Tibial artery (tissue), 4 donors: ENCODE measurements at regions of chr7 and their contacts with region 1.

Region 1: DNA sequence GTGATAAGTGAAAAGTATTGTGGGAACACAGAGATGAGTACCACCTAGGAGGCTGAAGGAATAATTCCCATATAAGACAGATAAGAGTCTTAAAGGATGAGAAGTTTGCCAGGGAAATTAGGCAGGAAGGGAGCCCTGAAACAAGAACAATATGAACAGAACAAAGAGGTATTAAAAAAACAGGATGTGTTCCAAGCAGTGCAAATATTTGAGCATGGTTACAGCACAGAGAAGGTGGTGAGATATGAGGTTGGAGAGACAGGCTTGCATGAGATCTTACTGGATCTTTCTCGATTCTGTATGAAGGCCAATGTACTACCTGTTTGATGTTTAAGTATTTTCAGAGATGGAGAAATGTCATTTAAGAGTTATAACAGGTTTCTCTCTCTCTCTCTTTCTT is 20.3 kb downstream of the TAC1 start:
- DNase-seq: no peak
- H3K4me3 ChIP-seq: no peak overlapping the region
- H3K27ac ChIP-seq: no peak overlapping the region
- H3K4me1 ChIP-seq: no peaks in the 10 kb centered on the region
- H3K27me3 ChIP-seq: no peaks in the 10 kb centered on the region
- CTCF ChIP-seq: no peak

Region 2: GRCh38 chr7:95804052-95804451 is 1948.2 kb before region 1 on chr7:
- intact Hi-C with region 1: loop called (anchors 5 kb)
- DNase-seq: no peak
- H3K4me3 ChIP-seq: no peak overlapping the region
- H3K27ac ChIP-seq: no peak overlapping the region
- H3K4me1 ChIP-seq: peaks cover 0 to 7% (median 0%) of the 10 kb centered on the region in 4 donors
- H3K27me3 ChIP-seq: no peaks in the 10 kb centered on the region
- CTCF ChIP-seq: no peak

Region 3: DNA sequence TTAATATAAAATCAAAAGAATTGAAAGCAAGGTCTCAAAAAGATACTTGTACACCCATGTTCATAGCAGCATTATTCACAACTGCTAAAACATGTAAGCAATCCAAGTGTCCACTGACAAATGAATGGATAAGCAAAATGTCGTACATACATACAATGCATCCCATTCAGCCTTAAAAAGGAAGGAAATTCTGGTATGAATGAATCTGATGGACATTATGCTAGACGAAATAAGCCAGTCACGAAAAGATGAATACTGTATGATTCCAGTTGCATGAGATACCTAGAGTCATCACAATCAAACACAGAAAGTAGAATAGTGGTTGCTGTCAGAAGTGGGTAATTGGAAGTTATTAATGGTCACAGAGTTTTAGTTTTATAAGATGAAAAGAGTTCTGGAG is 29.8 kb before region 1 on chr7:
- intact Hi-C with region 1: no loop called
- DNase-seq: no peak
- H3K4me3 ChIP-seq: no peak overlapping the region
- H3K27ac ChIP-seq: no peak overlapping the region
- H3K4me1 ChIP-seq: no peaks in the 10 kb centered on the region
- H3K27me3 ChIP-seq: no peaks in the 10 kb centered on the region
- CTCF ChIP-seq: no peak